ENCODE measurements at regions of chr1 and their contacts with region 1.

Region 1: DNA sequence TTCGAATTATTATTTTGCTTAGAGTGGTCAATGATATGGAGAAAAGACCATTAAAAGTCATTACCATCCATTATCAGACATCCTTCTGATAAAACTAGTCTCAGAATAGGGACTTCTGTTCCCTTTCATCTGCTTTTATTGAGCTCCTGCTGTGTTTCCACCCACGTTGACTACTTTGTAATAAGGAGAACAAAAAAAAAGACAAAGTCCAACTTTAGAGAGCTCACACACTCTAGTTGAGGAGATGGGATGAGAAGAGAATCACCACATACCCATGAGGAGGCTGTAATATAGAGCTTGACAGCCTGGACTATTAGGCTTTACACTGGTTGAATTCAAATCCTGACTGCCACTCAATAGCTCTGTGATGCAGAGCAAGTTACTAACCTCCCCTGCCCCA is 27.8 kb upstream of the ALDH9A1 start:
- DNase-seq: no peak
- ATAC-seq: no peak

Region 2: GRCh38 chr1:165531021-165531420 is 195.1 kb before region 1 on chr1:
- intact Hi-C with region 1: no loop called
- DNase-seq: no peak
- ATAC-seq: peak; percentile 85

Region 3: DNA sequence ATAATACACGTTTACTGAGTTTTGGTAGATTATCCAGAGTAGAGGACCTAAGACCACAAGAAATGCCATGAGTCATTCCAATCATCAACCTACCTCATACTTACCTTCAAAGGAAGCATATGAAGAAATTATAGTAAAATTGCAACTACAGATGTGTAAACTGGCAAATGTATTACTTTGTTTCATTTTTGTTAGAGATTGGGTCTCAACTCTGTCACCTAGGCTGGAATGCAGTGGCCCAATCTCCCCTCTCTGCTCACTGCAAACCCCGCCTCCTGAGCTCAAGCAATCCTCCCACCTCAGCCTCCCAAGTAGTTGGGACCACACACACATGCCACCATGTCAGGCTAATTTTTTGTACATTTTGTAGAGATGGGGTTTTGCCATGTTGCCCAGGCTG is 37.3 kb after region 1 on chr1:
- intact Hi-C with region 1: loop called (anchors 5 kb)
- DNase-seq: no peak
- ATAC-seq: no peak

Region 4: DNA sequence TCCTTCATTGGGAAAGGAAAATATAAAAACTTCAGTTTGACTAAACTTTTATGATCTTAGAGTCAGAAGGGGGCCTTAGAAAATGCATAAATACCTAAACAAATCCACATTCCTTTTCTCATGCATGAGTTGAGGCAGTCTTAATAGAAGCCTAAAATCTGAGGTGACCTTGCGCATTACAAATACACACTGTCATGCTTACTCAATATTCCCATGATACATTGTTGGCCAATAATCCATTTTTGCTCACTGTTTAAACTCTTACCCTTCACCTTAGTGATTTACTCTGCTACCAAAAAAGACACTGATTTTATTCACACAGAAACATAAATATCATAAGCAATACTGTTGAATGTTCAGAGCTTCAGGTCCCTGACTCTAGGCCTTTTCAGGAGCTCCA is 61.6 kb after region 1 on chr1:
- intact Hi-C with region 1: no loop called
- DNase-seq: no peak
- ATAC-seq: no peak